Sigmoid colon (tissue), 7 donors: ENCODE measurements at regions of chr5 and their contacts with region 1.

Region 1: DNA sequence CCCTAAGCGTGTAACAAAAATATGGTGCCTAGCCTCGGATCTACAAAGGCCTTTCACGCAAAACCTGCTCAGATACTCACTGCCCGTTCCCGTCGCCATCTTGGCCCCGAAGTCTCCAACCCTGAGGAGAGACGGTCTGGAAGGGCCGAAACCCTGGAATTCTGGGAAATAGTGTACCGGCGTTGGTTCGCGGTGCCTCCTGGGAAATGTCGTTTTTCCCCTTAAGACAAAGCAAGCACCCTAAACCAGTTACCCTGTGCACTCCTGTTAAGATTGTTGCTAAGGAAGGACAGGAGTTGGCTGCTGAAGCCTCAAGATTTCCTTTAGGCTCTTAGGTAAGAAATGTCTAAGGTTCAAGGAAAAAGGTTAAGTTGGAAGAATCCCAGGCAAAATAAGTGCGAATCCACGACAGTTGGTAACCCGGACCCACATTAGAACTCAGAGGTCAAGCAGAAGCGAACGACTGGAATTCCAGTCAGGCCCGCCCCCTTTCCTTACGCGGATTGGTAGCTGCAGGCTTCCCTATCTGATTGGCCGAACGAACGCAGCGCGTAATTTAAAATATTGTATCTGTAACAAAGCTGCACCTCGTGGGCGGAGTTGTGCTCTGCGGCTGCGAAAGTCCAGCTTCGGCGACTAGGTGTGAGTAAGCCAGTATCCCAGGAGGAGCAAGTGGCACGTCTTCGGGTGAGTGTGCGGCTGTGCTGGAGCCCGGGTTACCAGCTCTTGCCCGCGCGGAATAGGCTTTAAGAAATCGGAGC is at the starts of genes BRD8 and KIF20A:
- DNase-seq: peak; percentile 98
- H3K4me3 ChIP-seq: peak within 1 kb of the TSS; percentile 70 to 79 (median 76)
- H3K27ac ChIP-seq: peak within 1 kb of the TSS; percentile 74 to 93 (median 87)
- H3K4me1 ChIP-seq: peaks cover 0 to 27% (median 20%) of the 10 kb centered on the region in 4 donors
- H3K27me3 ChIP-seq: no peaks in the 10 kb centered on the region
- CTCF ChIP-seq: no peak
- EP300 ChIP-seq: peak in 2 of 4 donors; percentile 5 to 64
- POLR2A ChIP-seq: peak in 1 of 2 donors; percentile 23
- total RNA-seq, gene BRD8: 48.5 to 52.3 (median 50.5) TPM
- total RNA-seq, gene KIF20A: 0.36 to 0.55 (median 0.54) TPM in 3 of 4 donors, not detected in the other

Region 2: GRCh38 chr5:138213161-138214029 is 34.7 kb after region 1 on chr5 and contains the start of gene CDC23:
- intact Hi-C with region 1: loop called (anchors 2 kb)
- DNase-seq: peak; percentile 96
- H3K4me3 ChIP-seq: peak within 1 kb of the TSS; percentile 89 to 98 (median 92)
- H3K27ac ChIP-seq: peak within 1 kb of the TSS; percentile 82 to 85 (median 83)
- H3K4me1 ChIP-seq: peaks cover 0 to 29% (median 24%) of the 10 kb centered on the region in 4 donors
- H3K27me3 ChIP-seq: no peaks in the 10 kb centered on the region
- CTCF ChIP-seq: no peak
- EP300 ChIP-seq: no peak
- POLR2A ChIP-seq: peak; percentile 34 to 66
- total RNA-seq, gene CDC23: 17.2 to 33.1 (median 19.7) TPM

Region 3: DNA sequence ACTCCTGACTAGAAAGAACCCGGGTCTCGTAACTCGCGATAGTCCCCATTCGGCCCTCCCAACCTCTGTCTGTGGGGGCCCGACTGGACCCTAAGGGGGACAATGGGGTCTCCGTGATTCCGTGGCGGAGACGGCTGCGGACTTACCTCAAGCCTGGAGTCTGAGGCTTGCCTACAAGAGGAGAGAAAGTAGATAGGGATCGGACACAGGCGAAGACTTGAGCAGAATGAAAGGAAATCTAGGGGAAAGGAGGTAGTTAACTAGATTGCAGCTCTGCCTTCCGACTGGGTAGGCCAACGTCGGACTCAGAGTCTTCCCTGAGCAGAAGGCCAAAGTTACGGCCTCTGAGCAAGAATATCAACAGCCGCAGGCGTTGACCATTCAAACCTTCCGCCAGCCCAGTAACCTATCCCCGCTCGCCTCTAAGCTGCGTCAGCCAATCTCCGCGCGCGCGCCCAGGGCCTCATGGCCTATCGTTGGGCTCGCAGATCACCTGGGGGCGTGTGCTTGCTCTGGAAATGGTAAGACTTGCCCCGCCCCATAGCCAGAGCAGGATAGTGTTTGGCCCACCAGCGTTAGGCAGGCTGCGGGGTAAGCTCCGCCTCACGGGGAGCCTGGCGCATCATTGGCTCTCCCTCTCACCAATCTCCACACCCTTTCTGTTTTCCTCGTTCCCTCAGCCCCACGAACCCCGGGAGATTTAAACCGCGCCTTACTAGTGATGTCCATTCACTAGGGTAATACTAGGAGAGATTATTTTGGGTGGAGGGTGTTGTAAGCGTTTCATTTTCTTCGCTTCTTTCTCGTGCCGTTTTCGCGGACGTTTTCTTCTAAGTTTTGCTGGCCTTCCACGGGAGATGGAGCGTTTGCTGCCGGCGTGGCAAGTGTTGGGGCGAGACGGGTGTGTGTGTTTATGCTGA is 153.0 kb after region 1 on chr5 and contains the start of gene CDC25C:
- intact Hi-C with region 1: loop called (anchors 5 kb)
- DNase-seq: peak; percentile 99
- H3K4me3 ChIP-seq: peak within 1 kb of the TSS; percentile 0 to 49 (median 40)
- H3K27ac ChIP-seq: peak within 1 kb of the TSS in 2 of 4 donors; percentile 35 to 53
- H3K4me1 ChIP-seq: peaks cover 0 to 14% (median 12%) of the 10 kb centered on the region in 4 donors
- H3K27me3 ChIP-seq: no peaks in the 10 kb centered on the region
- CTCF ChIP-seq: no peak
- EP300 ChIP-seq: no peak
- POLR2A ChIP-seq: no peak
- total RNA-seq, gene CDC25C: 0.27 TPM in 1 of 4 donors, not detected in the others